ENCODE measurements at regions of chr16 and their contacts with region 1.

Region 1: GRCh38 chr16:62954144-62955032 is 918.1 kb upstream of the CDH8 start:
- DNase-seq: no peak
- H3K4me3 ChIP-seq: no peak overlapping the region
- H3K27ac ChIP-seq: no peak overlapping the region
- H3K4me1 ChIP-seq: no peaks in the 10 kb centered on the region
- H3K27me3 ChIP-seq: no peaks in the 10 kb centered on the region
- CTCF ChIP-seq: no peak

Region 2: DNA sequence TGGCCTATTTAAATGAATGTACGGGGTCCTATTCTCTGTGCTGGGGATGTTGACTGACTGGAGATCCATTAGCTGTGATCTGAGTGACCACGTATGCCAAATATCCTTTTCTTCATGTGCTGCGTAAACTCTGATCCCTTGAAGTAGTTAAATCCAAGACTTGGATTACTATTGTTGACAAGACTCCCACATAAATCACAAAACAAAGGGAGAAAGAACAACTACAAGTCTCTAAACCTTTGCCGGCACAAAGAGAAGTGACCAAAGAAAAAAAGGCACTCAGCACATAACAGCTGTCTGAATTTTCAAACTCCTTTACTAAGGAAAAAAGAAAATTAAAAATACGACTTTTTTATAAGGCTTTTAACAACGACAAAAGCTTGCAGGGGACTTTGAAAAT is 358.3 kb before region 1 on chr16:
- intact Hi-C with region 1: no loop called
- DNase-seq: no peak
- H3K4me3 ChIP-seq: no peak overlapping the region
- H3K27ac ChIP-seq: no peak overlapping the region
- H3K4me1 ChIP-seq: no peaks in the 10 kb centered on the region
- H3K27me3 ChIP-seq: no peaks in the 10 kb centered on the region
- CTCF ChIP-seq: no peak

Region 3: DNA sequence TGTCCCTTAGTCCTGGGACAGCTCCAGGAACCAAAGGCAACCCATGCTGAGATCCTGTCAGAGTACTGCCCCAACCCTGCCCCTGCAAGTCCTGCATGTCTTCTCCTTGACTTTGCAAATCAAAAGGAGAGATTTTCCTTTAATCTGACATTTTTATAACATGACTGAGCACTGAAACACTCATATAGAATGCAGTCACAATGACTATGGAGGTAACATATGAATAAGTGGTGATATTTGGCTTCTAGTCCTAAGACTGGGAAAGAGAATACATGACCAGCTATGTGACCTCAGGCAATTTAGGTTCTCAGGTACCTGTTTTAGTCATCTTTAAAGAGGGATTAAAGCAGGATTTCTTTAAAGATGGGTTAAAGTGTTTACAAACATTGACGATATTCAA is 23.5 kb after region 1 on chr16:
- intact Hi-C with region 1: loop called (anchors 1 kb)
- DNase-seq: no peak
- H3K4me3 ChIP-seq: no peak overlapping the region
- H3K27ac ChIP-seq: no peak overlapping the region
- H3K4me1 ChIP-seq: no peaks in the 10 kb centered on the region
- H3K27me3 ChIP-seq: no peaks in the 10 kb centered on the region
- CTCF ChIP-seq: no peak

Measured in tibial artery (tissue), 4 donors.